Right cardiac atrium (tissue), 5 donors: ENCODE measurements at regions of chr6 and their contacts with region 1.

Region 1: DNA sequence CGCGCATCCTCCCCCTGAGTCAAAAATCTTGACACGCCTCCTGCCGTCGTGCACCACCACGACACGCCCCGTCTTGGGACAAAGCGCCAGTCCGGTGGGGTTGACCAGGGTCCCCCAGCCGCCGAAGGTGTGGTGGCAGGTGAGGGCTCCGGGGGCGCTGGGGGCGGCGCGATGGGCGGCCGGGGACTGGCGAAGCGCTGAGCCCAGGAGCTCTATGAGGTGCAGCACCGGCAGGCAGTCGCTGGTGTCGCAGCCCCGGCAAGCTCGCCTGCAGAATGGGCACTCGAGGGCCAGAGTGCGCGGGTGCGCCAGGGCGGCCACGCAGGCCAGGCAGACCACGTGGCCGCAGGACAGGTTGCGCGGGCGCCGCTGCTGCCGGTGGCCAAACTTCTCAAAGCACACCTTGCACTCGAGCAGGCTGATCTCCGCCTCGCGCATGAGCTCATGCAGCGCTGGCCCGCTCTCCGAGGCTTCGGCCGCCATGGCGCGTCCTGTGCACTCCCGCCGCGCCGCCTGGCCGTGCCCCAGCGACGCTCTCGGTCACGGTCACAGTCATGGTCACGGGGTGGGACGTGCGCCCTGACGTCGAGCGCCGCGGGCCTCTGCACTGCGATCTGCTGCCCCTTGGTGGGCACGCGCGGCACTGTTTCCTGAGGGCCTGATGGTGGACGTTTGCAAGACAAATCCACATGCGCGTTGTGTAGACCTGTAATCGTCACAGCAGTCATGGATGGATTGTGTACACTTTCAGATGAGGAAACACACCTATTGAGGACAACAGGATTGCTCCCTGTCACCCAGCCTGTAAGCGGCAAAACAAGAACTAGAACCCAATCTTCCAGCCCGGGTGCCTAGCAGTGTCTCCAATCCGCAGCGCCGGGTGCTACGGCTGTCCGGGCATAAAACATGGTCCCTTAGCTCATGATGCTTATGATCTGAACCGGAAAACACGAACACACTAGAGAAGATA is at the start of gene NHLRC1:
- DNase-seq: peak; percentile 93 to 97 (median 96)
- ATAC-seq: peak; percentile 99
- H3K4me3 ChIP-seq: peak within 1 kb of the TSS; percentile 17
- H3K27ac ChIP-seq: no peak within 1 kb of the TSS
- H3K4me1 ChIP-seq: no peaks in the 10 kb centered on the region
- H3K27me3 ChIP-seq: no peaks in the 10 kb centered on the region
- total RNA-seq, gene NHLRC1: 1.3 to 3.7 (median 2.7) TPM

Region 2: DNA sequence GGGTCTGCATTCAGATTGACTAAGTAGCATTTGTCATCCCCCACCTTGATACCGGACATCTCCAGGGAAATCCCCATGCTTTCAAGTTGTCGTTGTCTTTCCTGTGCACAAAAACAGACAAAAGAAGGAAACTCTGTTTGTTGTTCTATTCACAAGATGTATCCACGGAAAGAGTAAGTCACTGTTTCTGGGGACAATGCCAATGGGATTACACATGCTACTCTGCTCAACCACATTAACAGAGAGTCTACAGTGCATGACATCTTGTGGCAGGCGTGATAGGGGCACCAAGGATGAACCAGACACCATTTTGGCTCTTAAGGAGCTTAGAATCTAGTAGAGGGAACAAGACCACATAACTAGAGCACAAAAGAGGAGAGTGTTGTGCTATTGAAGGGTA is 291.3 kb before region 1 on chr6:
- intact Hi-C with region 1: loop called (anchors 5 to 10 kb)
- DNase-seq: no peak
- ATAC-seq: peak; percentile 71 to 92
- H3K4me3 ChIP-seq: no peak overlapping the region
- H3K27ac ChIP-seq: no peak overlapping the region
- H3K4me1 ChIP-seq: peaks cover 2% of the 10 kb centered on the region
- H3K27me3 ChIP-seq: no peaks in the 10 kb centered on the region

Region 3: DNA sequence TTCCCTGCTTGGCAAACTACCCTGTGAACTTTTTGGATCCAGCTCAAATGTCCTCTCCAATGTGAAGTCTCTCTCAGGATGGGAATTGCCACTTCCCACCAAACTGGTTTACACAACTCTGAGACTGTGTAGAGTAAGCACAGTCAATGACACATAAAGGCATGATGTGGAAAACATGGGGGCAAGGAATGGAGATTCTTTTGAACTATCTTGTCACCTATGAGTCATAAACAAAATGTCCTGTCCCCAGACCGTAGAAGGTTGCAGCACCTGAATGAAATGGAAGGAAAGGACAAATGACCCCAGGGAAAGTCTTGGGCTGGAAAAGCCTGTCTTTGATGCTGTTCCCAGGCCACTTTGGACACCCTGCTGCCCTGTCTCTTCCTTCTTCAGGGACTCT is 124.0 kb before region 1 on chr6:
- intact Hi-C with region 1: loop called in 1 of 4 experiments (anchors 10 kb)
- DNase-seq: no peak
- ATAC-seq: no peak
- H3K4me3 ChIP-seq: no peak overlapping the region
- H3K27ac ChIP-seq: no peak overlapping the region
- H3K4me1 ChIP-seq: no peaks in the 10 kb centered on the region
- H3K27me3 ChIP-seq: no peaks in the 10 kb centered on the region